ENCODE measurements at regions of chr7 and their contacts with region 1.

Region 1: DNA sequence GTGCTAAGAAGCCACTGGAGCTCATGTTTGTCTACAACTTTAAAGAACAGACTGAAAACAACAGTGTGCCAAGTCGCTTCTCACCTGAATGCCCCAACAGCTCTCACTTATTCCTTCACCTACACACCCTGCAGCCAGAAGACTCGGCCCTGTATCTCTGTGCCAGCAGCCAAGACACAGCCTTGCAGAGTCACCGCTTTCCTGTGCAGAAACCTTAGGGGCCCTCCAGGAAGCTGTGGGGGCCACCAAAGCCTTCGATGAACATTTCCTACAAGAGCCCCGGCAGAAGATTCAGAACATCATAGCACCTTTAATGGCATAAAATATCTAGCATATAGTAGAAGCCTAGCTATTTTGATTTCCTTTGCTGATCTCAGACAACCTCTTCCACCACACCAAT is 88.0 kb upstream of the PRSS58 start:
- DNase-seq: no peak
- H3K4me3 ChIP-seq: no peak overlapping the region
- H3K27ac ChIP-seq: no peak overlapping the region
- H3K4me1 ChIP-seq: no peaks in the 10 kb centered on the region
- H3K27me3 ChIP-seq: no peaks in the 10 kb centered on the region
- CTCF ChIP-seq: no peak

Region 2: DNA sequence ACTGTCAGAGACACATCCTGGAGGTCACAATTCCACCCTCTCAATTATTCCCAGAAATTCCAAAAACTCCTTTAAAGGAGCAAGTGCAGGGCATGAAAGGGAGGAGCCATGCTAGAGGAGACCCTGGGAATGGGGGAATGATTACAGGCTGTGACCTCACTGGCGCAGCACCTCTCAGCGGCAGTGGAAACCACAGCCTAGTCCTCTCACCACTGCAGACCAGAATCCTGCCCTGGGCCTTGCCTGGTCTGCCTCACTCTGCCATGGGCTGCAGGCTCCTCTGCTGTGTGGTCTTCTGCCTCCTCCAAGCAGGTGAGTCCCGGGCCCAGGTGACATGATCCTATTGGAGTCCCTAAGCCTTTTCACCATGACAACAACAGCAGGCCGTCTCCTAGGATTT is 37.5 kb before region 1 on chr7:
- intact Hi-C with region 1: loop called (anchors 2 kb)
- DNase-seq: no peak
- H3K4me3 ChIP-seq: no peak overlapping the region
- H3K27ac ChIP-seq: no peak overlapping the region
- H3K4me1 ChIP-seq: no peaks in the 10 kb centered on the region
- H3K27me3 ChIP-seq: no peaks in the 10 kb centered on the region
- CTCF ChIP-seq: no peak

Measured in colonic mucosa (tissue), 4 donors.